ENCODE measurements at regions of chr14 and their contacts with region 1.

Region 1: GRCh38 chr14:92297818-92298595 is 25.0 kb upstream of the SLC24A4 start:
- DNase-seq: no peak
- H3K4me3 ChIP-seq: no peak overlapping the region
- H3K27ac ChIP-seq: no peak overlapping the region
- H3K4me1 ChIP-seq: no peaks in the 10 kb centered on the region
- H3K27me3 ChIP-seq: no peaks in the 10 kb centered on the region
- CTCF ChIP-seq: no peak

Region 2: DNA sequence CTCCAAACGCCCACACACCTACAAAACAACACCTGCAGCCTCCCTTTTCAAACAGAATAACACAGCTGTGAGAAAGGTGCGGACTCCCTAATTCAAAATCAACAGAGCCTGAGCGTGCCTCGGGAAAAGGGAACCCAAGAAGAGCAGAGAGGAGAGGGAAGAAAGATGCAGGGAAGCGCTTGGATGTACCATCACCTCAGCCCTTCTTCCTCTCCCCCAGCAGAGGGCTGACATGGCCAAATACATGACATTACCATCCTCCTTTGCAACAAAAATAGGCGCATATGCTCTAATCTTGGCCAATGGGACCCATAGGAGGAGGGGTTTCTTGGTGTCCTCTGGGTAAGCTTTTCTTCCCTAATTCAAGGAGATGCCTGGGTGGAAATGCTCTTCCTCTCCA is 98.2 kb before region 1 on chr14:
- CTCF ChIA-PET with region 1: no interaction called
- dilution Hi-C with region 1: no loop called
- in situ Hi-C with region 1: no loop called
- intact Hi-C with region 1: no loop called
- DNase-seq: no peak
- H3K4me3 ChIP-seq: no peak overlapping the region
- H3K27ac ChIP-seq: no peak overlapping the region
- H3K4me1 ChIP-seq: no peaks in the 10 kb centered on the region
- H3K27me3 ChIP-seq: no peaks in the 10 kb centered on the region
- CTCF ChIP-seq: no peak

Region 3: DNA sequence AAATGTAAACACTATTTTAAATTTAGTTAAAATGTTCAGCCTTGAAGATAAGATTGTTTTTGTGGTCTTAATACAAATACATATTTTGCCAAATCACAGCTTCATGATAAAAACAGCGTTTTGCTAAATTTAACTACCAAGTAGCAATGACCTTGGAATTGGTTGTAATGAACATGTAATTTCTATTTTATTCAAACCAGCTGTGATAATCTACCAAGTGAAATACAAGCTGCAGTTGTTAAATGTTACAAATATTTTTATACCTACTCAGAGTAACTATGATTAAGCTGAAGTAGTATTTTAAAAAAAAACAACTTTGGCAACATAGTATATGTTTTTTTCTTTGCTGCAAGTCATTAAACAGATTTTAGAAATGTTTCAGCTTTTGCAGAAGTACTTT is 80.1 kb before region 1 on chr14:
- CTCF ChIA-PET with region 1: no interaction called
- dilution Hi-C with region 1: loop called (anchors 5 kb)
- in situ Hi-C with region 1: no loop called
- intact Hi-C with region 1: no loop called
- DNase-seq: no peak
- H3K4me3 ChIP-seq: no peak overlapping the region
- H3K27ac ChIP-seq: no peak overlapping the region
- H3K4me1 ChIP-seq: no peaks in the 10 kb centered on the region
- H3K27me3 ChIP-seq: no peaks in the 10 kb centered on the region
- CTCF ChIP-seq: no peak

Region 4: GRCh38 chr14:92563359-92563758 is 265.4 kb after region 1 on chr14:
- CTCF ChIA-PET with region 1: no interaction called
- dilution Hi-C with region 1: no loop called
- in situ Hi-C with region 1: no loop called
- intact Hi-C with region 1: no loop called
- DNase-seq: peak; percentile 65
- H3K4me3 ChIP-seq: no peak overlapping the region
- H3K27ac ChIP-seq: no peak overlapping the region
- H3K4me1 ChIP-seq: peaks cover 3% of the 10 kb centered on the region
- H3K27me3 ChIP-seq: no peaks in the 10 kb centered on the region
- CTCF ChIP-seq: no peak